Dorsolateral prefrontal cortex (tissue), 120 donors: ENCODE measurements at regions of chr13 and their contacts with region 1.

Region 1: DNA sequence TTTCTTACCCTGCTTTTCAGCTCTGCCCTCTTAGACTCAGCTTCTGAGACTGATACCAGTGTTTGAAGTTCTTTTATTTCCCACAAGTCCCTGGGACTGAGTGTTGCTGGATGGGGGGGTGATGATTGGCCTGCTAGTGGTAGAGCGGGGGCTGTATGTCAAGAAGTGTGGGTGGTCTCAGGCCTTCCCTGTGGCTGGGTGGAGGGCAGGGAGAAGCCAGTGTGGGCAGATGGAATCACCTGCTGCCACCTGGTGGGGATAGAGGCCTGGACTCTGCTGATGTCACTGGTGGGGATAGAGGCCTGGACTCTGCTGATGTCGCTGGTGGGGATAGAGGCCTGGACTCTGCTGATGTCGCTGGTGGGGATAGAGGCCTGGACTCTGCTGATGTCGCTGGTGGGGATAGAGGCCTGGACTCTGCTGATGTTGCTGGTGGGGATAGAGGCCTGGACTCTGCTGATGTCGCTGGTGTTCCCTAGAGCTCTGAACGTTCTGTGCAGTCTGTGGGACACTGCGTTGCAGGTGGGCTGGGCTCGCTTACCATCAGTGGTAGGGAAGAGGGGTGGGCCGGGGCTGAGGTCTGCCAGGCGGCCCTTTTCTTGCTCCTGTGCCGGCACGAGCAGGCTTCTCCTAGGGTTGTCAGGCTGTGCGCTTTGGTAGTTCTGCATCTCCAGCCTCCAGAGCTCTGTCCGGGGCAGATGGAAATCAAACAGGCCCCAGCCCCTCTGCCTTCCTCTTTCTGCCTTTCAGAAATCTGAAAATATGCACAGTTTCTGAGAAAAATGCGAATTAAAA is 101.3 kb downstream of the ARHGEF7 start:
- DNase-seq: peak in 6 of 10 donors; percentile 47 to 70 (median 60)
- H3K4me3 ChIP-seq: peak overlapping the region in 4 of 59 donors; percentile 1 to 28 (median 14)
- H3K27ac ChIP-seq: peak overlapping the region in 46 of 59 donors; percentile 16 to 93 (median 62)
- H3K27me3 ChIP-seq: no peaks in the 10 kb centered on the region
- CTCF ChIP-seq: peak in 52 of 56 donors; percentile 23 to 73 (median 50)

Region 2: DNA sequence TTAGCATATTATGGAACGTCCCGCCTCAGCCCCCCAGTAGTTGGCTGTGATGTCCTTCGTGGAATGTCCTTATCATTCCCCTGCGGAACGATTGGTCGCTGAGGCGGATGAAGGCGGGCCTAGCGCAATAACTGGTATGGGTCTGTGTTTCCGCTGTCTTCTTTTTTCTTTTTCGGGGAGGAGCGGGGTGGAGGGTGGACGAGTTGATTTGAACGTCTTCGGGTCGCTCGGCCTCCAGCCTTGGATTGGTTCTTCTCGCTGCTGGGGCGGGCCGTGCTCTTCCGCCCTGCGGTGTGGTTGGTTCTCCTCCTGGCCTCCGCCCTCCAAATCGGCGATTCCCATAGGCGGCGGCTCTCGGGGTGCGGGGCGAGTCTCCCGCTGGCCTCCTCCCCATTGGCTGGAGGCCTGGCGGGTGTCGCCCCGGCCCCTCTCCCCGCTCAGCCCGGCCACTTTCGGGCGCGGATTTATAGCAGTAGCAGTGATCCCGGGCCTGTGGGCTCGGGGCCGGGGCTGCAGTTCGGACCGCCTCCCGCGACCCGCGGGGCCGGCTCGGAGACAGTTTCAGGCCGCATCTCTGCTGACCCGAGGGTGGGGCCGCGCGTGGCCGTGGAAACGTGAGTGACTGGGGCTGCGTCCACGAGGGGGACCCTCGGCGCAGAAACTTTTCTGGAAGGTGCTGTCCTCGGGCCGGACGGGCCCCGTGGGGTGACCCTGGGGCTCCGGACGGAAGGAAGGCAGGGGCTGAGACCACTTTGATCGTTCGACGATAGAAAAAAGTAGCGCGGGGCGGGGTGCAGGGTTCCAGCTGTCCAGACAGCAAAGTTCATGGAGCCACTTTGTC is 500.7 kb before region 1 on chr13:
- intact Hi-C with region 1: loop called in 1 of 2 experiments (anchors 10 kb)
- DNase-seq: peak; percentile 90 to 100 (median 99)
- H3K4me3 ChIP-seq: peak overlapping the region; percentile 76 to 100 (median 98)
- H3K27ac ChIP-seq: peak overlapping the region; percentile 92 to 100 (median 99)
- H3K27me3 ChIP-seq: no peaks in the 10 kb centered on the region
- CTCF ChIP-seq: peak in 37 of 56 donors; percentile 6 to 55 (median 26)

Region 3: GRCh38 chr13:111066544-111066943 is 149.8 kb before region 1 on chr13:
- intact Hi-C with region 1: loop called (anchors 5 kb)
- DNase-seq: no peak
- H3K4me3 ChIP-seq: peak overlapping the region in 38 of 59 donors; percentile 16 to 84 (median 70)
- H3K27ac ChIP-seq: peak overlapping the region in 2 of 59 donors; percentile 21 to 28
- H3K27me3 ChIP-seq: peaks cover 0 to 3% (median 0%) of the 10 kb centered on the region in 45 donors
- CTCF ChIP-seq: no peak

Region 4: GRCh38 chr13:111095031-111095840 is 121.1 kb before region 1 on chr13:
- intact Hi-C with region 1: no loop called
- DNase-seq: no peak
- H3K4me3 ChIP-seq: no peak overlapping the region
- H3K27ac ChIP-seq: no peak overlapping the region
- H3K27me3 ChIP-seq: peaks cover 0 to 37% (median 4%) of the 10 kb centered on the region in 45 donors
- CTCF ChIP-seq: no peak

Region 5: DNA sequence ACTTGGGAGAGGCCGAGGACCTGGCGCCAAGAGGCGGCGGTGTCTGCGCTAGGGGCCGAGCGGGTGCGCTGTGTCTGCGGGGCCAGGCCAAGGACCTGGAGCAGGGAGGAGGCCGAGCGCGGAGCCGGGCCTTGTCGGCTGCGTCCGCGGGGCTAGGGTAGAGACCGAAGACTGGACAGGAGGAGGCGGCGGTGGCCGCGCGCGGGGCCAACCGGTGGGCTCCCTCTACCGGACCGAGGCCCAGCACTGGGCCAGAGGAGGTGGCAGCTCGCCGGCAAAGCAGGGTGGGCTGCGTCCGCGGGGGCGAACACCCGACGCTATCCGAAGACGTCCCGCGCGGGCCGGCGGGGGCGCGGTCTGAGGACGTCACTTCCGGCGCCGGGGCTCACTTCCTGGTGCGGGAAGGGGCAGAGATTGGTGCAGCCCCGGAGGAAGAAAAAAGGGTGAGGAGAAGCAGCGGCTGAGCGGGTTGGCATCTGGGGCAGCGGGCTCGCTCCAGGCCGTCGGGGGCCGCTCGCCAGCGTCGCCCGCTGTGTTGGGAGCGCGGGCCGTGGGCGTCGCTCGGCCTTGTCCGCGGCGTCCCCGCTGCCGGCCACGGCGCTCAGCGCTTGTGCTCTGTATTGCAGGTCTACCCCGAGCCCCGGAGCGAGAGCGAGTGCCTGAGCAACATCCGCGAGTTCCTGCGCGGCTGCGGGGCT is 62.9 kb before region 1 on chr13:
- intact Hi-C with region 1: loop called in 1 of 2 experiments (anchors 2 kb)
- DNase-seq: peak; percentile 88 to 96 (median 92)
- H3K4me3 ChIP-seq: peak overlapping the region; percentile 56 to 99 (median 90)
- H3K27ac ChIP-seq: peak overlapping the region; percentile 78 to 99 (median 96)
- H3K27me3 ChIP-seq: no peaks in the 10 kb centered on the region
- CTCF ChIP-seq: peak in 53 of 56 donors; percentile 4 to 72 (median 46)

Region 6: GRCh38 chr13:111281751-111282311 is 65.5 kb after region 1 on chr13:
- intact Hi-C with region 1: loop called in 1 of 2 experiments (anchors 5 kb)
- DNase-seq: no peak
- H3K4me3 ChIP-seq: peak overlapping the region in 1 of 59 donors; percentile 1
- H3K27ac ChIP-seq: peak overlapping the region in 58 of 59 donors; percentile 22 to 94 (median 83)
- H3K27me3 ChIP-seq: no peaks in the 10 kb centered on the region
- CTCF ChIP-seq: peak in 1 of 56 donors; percentile 13

Region 7: DNA sequence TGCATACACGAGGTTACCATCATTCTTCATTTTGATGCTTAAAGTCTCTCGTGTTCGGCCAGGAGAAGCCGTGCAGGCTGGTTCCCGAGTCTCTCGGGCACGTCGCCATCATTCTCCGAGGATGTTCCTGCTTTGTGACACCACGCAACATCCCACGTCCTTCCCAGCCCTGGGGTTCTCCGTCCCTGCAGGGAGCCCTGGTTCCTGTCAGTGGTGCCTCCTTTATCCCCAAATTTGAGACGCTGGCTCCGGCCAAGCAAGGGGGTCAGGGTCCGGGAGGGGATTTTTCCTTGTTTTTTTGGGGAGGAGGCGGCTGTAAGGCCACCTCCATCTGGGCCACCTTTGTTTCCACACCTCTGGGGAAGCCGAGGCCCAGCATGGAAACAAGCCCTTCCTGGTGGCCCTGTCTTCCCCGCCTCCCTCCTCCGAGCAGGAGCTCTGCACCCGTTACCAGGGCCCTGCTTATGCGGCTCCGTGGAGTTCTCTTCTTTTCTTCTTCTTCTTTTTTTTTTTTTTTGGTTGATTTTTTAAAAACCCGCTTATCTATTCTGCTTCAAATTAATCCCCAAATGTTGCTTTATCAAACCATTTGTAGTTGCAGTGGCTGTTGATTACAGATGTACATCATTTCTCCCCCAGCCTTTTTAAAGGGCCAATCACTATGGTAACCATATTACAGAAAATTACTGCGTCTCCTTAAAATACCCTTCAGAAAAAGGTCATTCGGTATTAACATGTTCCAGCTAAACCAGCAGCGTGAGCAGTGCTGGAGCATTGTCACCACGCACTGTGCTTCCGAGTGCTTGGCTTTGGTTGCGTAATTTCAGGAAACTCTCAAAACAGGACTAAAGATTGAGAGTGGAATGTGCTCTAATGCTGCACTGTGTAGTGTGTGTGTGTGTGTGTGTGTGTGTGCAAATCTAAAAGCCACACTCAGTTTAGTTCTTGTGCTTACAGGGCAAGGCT is 154.5 kb after region 1 on chr13:
- intact Hi-C with region 1: no loop called
- DNase-seq: no peak
- H3K4me3 ChIP-seq: no peak overlapping the region
- H3K27ac ChIP-seq: no peak overlapping the region
- H3K27me3 ChIP-seq: peaks cover 0 to 2% (median 0%) of the 10 kb centered on the region in 45 donors
- CTCF ChIP-seq: no peak

Region 8: GRCh38 chr13:111460548-111461444 is 244.4 kb after region 1 on chr13:
- intact Hi-C with region 1: loop called in 1 of 2 experiments (anchors 10 kb)
- DNase-seq: peak; percentile 44 to 75 (median 72)
- H3K4me3 ChIP-seq: no peak overlapping the region
- H3K27ac ChIP-seq: peak overlapping the region in 2 of 59 donors; percentile 27 to 76
- H3K27me3 ChIP-seq: peaks cover 0 to 46% (median 0%) of the 10 kb centered on the region in 45 donors
- CTCF ChIP-seq: peak in 54 of 56 donors; percentile 34 to 83 (median 66)